Calu3 (cell line): ENCODE measurements at regions of chr3 and their contacts with region 1.

Region 1: DNA sequence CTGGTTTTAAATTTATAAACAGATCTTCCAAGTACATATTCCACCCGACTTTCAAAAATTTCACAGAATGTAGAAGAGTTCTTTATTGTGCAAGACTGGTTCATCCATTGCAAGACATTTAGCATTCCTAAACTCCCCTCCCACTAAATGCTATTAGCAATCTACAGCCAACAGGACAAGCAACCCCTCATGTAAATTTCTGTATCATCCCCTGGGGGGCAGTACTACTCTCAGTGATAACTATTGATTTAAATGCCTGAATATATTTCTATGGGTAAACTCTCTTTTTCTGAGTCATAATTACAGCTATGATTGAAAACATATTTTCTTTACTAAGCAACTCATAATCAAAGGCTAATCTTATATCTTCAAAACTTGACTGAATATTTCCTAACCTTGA is 10.7 kb upstream of the SLC15A2 start:
- DNase-seq: peak; percentile 44
- H3K4me3 Mint-ChIP-seq: no peak overlapping the region
- H3K27ac Mint-ChIP-seq: no peak overlapping the region
- H3K4me1 Mint-ChIP-seq: peaks cover 12% of the 10 kb centered on the region
- H3K27me3 Mint-ChIP-seq: no peaks in the 10 kb centered on the region
- CTCF ChIP-seq: peak; percentile 43

Region 2: DNA sequence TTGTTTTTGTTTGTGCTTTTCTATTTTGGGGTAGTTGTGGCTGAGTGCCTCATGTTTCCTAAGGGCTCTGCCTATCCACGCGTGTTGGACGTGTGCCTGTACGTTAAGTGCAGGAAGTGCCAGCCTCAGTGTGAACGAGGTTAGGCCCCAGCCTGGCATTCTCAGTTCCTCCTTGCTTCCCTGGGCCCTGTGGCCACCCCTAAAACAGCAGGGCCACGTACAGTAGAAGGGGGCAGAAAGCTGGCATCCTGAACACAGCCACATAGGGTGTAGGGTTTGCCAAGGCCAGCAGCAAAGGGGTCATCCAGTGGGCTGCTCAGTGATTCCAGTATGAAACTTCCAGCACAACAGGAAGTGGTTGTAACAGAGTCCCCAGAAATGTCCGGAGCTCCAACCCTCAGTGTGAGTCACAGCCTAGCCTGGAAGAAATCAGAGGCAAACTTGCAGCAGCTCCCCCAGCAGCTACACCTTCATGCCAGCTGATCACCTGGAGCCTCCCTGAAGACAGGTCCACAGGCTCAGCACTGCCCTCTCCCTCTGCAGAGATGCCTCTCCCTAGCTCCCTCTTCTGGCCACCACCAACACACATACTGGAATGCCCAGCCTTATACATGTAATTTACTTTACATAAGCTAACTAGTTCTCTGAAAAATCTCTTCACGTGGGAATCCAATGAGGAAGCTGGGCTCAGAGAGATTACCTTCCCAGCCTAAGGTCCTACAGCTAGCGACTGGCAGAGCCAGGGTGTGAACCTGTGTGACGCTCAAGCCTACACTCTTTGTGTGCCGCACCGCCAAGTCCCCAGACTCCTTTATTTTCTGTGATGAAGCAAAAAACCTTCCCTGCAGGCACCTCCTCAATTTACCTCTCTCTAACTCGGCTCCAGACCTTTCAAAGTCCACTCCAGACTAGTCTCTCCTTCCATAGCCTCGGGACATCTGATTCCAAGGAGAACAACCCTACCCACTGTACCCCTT is 111.9 kb after region 1 on chr3:
- CTCF ChIA-PET with region 1: interaction called, 8 read pairs
- intact Hi-C with region 1: loop called (anchors 1 kb)
- DNase-seq: peak; percentile 82
- H3K4me3 Mint-ChIP-seq: no peak overlapping the region
- H3K27ac Mint-ChIP-seq: peak overlapping the region; percentile 89
- H3K4me1 Mint-ChIP-seq: peaks cover 37% of the 10 kb centered on the region
- H3K27me3 Mint-ChIP-seq: no peaks in the 10 kb centered on the region
- CTCF ChIP-seq: peak; percentile 54

Region 3: DNA sequence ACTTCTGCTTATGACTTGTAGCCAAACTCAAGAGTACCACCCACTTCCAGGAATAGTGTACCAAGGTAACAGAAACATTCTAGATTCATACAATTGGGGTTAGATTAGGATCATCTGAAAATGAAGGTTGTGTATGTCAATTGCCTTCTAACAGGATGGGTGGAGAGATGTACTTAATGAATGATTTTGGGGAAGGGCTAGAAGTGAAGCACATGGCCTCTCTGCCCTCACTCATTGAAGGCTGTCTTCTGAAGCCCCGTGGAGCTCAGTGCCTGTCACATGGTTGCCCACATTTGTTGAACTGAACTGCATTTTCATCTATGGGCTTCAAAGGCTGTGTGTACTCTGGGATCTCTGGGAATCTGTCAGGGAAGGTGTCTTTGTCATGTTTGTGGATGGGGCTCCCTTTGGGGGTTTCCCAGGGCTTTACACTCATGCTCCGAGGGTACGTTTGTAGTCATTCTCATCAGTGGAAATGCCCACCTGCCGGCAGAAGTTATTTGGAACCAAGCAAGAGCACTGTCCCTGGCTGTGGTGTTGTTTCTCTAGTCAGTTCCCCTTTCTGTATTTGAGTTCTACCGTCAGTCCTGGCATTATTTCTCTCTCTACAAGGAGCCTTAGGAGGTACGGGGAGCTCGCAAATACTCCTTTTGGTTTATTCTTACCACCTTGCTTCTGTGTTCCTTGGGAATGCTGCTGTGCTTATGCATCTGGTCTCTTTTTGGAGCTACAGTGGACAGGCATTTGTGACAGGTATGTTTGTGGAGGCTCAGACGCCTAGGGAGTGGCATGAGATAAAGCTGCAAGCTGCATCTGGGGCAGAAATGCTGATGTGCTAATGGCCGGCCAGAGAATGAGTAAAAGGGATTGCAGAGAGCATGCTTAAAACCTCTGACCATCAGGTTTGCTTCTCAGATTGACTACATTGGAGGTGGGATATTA is 194.1 kb after region 1 on chr3:
- CTCF ChIA-PET with region 1: no interaction called
- intact Hi-C with region 1: no loop called
- DNase-seq: no peak
- H3K4me3 Mint-ChIP-seq: no peak overlapping the region
- H3K27ac Mint-ChIP-seq: no peak overlapping the region
- H3K4me1 Mint-ChIP-seq: peaks cover 9% of the 10 kb centered on the region
- H3K27me3 Mint-ChIP-seq: peaks cover 12% of the 10 kb centered on the region
- CTCF ChIP-seq: no peak